ENCODE measurements at regions of chr5 and their contacts with region 1.

Region 1: GRCh38 chr5:103758996-103759395 is 196.4 kb upstream of the NUDT12 start:
- DNase-seq: no peak
- ATAC-seq: no peak
- H3K4me3 ChIP-seq: no peak overlapping the region
- H3K27ac ChIP-seq: no peak overlapping the region
- H3K4me1 ChIP-seq: no peaks in the 10 kb centered on the region
- H3K27me3 ChIP-seq: no peaks in the 10 kb centered on the region
- CTCF ChIP-seq: no peak
- POLR2A ChIP-seq: no peak
- RAD21 ChIP-seq: no peak

Region 2: DNA sequence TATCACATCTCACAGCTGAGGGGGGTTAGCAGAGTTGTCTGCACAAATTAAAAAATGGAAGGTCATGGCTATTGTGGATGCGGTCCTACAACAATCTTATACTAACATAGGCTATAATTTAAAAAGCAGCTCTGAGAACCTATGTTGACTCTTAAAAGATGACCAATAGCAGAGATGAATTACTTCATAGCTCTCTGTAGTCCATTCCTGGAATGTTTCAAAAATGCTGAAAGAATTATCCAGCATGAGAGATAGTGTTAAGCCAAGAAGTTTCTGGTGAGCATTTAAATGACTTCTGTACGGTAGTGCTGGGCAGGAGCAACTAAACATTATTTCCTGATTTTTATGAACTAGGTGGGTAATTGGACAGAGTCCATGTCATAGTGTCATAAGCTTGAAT is 21.8 kb after region 1 on chr5:
- CTCF ChIA-PET with region 1: no interaction called
- POLR2A ChIA-PET with region 1: no interaction called
- RAD21 ChIA-PET with region 1: no interaction called
- intact Hi-C with region 1: loop called (anchors 2 kb)
- DNase-seq: no peak
- ATAC-seq: no peak
- H3K4me3 ChIP-seq: no peak overlapping the region
- H3K27ac ChIP-seq: no peak overlapping the region
- H3K4me1 ChIP-seq: no peaks in the 10 kb centered on the region
- H3K27me3 ChIP-seq: no peaks in the 10 kb centered on the region
- CTCF ChIP-seq: no peak
- POLR2A ChIP-seq: no peak
- RAD21 ChIP-seq: no peak

Region 3: GRCh38 chr5:104016646-104017045 is 257.6 kb after region 1 on chr5:
- CTCF ChIA-PET with region 1: no interaction called
- POLR2A ChIA-PET with region 1: no interaction called
- RAD21 ChIA-PET with region 1: no interaction called
- intact Hi-C with region 1: no loop called
- DNase-seq: no peak
- ATAC-seq: no peak
- H3K4me3 ChIP-seq: no peak overlapping the region
- H3K27ac ChIP-seq: no peak overlapping the region
- H3K4me1 ChIP-seq: no peaks in the 10 kb centered on the region
- H3K27me3 ChIP-seq: no peaks in the 10 kb centered on the region
- CTCF ChIP-seq: no peak
- POLR2A ChIP-seq: no peak
- RAD21 ChIP-seq: no peak